Caco-2 (cell line): ENCODE measurements at regions of chr3 and their contacts with region 1.

Region 1: GRCh38 chr3:65245133-65246063 is 557.6 kb upstream of the ADAMTS9 start:
- DNase-seq: no peak
- H3K4me3 ChIP-seq: no peak overlapping the region
- H3K4me3 Mint-ChIP-seq: no peak overlapping the region
- H3K27ac Mint-ChIP-seq: no peak overlapping the region
- H3K4me1 ChIP-seq: peaks cover 16% of the 10 kb centered on the region
- H3K4me1 Mint-ChIP-seq: peaks cover 16% of the 10 kb centered on the region
- H3K27me3 ChIP-seq: no peaks in the 10 kb centered on the region
- H3K27me3 Mint-ChIP-seq: no peaks in the 10 kb centered on the region
- CTCF ChIP-seq: no peak

Region 2: DNA sequence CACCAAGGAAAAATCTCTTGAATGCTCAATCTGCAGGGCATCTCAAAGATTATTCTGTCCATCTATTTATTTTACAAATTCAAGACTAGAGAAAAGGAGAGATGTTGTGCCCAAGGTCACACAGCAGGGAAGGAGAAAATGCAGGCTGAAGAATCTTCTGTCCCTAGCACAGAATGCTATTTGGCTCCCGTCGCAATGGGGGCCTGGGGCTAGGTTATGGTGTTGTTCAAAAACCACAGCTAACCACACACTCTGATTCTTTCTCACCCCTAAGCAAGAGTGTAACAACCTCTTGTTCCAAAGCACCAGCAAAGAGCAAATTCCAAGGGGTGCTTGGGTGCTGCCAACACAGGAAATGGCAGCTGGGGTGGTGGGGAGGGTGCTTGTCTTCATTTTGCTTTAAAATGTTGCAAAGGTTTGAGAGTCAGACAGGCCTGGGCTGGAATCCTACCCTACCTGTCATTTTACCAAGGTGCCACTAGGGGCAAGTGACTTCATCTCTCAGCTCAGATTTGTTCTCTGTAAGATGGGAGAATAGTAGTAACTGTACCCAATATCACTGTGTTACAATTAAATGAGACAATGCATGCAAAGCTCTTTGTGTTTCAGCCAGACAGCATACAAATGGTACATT is 670.1 kb before region 1 on chr3:
- CTCF ChIA-PET with region 1: interaction called, 14 read pairs
- POLR2A ChIA-PET with region 1: no interaction called
- intact Hi-C with region 1: no loop called
- DNase-seq: peak in 1 of 2 experiments; percentile 22
- H3K4me3 ChIP-seq: no peak overlapping the region
- H3K4me3 Mint-ChIP-seq: no peak overlapping the region
- H3K27ac Mint-ChIP-seq: no peak overlapping the region
- H3K4me1 ChIP-seq: peaks cover 19% of the 10 kb centered on the region
- H3K4me1 Mint-ChIP-seq: peaks cover 14% of the 10 kb centered on the region
- H3K27me3 ChIP-seq: no peaks in the 10 kb centered on the region
- H3K27me3 Mint-ChIP-seq: no peaks in the 10 kb centered on the region
- CTCF ChIP-seq: peak; percentile 52 to 63

Region 3: GRCh38 chr3:65080432-65080831 is 165.0 kb before region 1 on chr3:
- CTCF ChIA-PET with region 1: no interaction called
- POLR2A ChIA-PET with region 1: no interaction called
- intact Hi-C with region 1: loop called (anchors 10 kb)
- DNase-seq: peak; percentile 26 to 39
- H3K4me3 ChIP-seq: no peak overlapping the region
- H3K4me3 Mint-ChIP-seq: no peak overlapping the region
- H3K27ac Mint-ChIP-seq: no peak overlapping the region
- H3K4me1 ChIP-seq: peaks cover 2% of the 10 kb centered on the region; the same call in 1 of the 2 replicates
- H3K4me1 Mint-ChIP-seq: no peaks in the 10 kb centered on the region
- H3K27me3 ChIP-seq: no peaks in the 10 kb centered on the region
- H3K27me3 Mint-ChIP-seq: no peaks in the 10 kb centered on the region
- CTCF ChIP-seq: peak in 1 of 2 experiments; percentile 47